Transverse colon (tissue), 4 donors: ENCODE measurements at regions of chr2 and their contacts with region 1.

Region 1: DNA sequence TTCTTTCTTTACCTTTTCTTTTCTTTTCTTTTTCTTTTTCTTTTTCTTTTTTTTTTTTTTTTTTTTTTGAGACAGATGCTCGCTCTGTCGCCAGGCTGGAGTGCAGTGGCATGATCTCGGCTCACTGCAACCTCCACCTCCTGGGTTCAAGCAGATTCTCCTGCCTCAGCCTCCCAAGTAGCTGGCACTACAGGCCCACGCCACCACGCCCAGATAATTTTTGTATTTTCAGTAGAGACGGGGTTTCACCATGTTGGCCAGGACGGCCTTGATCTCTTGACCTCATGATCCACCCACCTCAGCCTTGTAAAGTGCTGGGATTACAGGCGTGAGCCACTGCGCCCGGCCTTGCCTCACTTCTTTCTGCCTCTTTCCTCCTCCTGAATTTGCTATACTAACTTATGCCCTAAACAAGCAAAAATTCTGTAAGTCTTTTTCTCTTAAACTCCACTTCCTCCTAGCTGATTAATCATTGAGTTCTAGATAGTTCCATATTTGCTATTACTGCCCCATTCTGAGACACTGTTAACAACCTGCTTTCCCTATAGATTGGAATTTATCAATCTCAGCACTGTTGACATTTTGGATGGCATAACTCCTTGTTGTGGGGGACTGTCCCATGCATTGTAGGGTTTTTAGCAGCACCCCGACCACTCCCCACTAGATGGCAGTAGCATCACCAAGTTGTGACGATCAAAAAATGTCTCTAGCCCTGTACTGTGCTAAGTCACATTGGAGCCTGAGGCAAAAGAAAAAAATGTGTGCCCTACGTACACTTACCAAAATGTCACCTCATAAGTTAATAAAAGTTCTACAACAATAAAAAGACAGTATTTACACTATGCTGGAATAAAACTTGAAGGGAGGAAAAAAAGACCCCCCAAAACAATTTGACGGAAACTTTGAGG is 16.4 kb upstream of the THADA start:
- DNase-seq: peak; percentile 73
- H3K4me3 ChIP-seq: no peak overlapping the region
- H3K27ac ChIP-seq: peak overlapping the region in 2 of 4 donors; percentile 23 to 55
- H3K4me1 ChIP-seq: peaks cover 0 to 13% (median 2%) of the 10 kb centered on the region in 4 donors
- H3K27me3 ChIP-seq: no peaks in the 10 kb centered on the region
- CTCF ChIP-seq: peak; percentile 56 to 82 (median 76)
- EP300 ChIP-seq: no peak
- POLR2A ChIP-seq: no peak

Region 2: DNA sequence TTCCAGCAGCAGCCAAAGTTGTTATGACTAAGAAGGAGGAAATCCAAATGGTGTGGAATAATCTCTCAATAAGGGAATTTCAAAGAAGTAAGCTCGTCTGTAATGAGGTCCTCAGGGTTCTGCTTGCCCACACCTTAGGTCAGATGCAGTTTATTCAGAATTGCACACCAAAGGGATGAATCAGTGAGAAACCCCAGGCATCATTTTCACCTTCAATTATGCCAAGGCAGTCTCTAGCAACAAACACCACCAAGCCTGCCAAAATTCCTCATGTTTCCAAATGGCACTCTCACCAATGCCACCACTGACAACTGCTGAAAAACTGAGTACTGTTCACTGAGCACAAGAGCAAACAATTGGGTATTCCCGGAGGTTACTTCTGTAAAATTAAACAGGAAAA is 1162.1 kb before region 1 on chr2:
- in situ Hi-C with region 1: no loop called
- intact Hi-C with region 1: no loop called
- DNase-seq: no peak
- H3K4me3 ChIP-seq: no peak overlapping the region
- H3K27ac ChIP-seq: no peak overlapping the region
- H3K4me1 ChIP-seq: peaks cover 0 to 18% (median 8%) of the 10 kb centered on the region in 4 donors
- H3K27me3 ChIP-seq: no peaks in the 10 kb centered on the region
- CTCF ChIP-seq: no peak
- EP300 ChIP-seq: no peak
- POLR2A ChIP-seq: no peak

Region 3: DNA sequence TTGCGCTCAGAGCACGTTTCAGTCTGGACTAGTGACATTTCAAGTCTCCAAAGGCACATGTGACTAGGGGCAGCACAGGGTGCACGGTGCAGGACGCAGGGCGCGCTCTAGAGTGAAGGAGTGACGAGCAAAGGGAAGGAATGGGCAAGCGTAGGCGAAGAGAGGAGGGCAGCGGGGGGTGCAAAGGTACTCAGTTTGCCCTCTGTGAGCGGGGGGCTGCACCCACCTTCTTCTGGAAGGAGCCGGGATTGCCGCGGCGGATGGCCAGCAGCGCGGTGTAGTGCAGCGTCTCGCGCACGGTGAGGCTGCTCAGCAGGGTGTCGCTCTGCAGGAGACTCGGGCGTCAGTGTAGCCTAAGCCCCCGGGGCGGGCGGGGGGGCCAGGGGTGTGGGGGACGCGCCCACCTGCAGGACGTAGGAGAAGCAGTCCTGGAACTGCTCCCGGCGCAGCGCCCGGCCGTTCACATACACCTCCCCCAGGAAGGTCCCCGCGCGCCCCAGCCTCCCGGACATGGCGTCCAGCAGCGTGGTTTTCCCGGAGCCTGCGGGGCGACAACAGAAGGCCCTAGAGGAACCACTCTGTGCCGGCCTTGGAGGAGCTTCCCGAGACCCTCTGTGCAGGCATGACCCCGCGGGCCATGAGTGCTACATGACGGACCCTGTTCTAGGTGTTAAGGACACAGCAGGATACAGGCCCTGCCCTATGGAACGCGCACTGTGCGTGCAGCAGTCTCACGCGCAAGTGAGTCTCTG is 219.5 kb after region 1 on chr2:
- in situ Hi-C with region 1: no loop called
- intact Hi-C with region 1: no loop called
- DNase-seq: no peak
- H3K4me3 ChIP-seq: peak overlapping the region in 3 of 4 donors; percentile 19 to 31 (median 25)
- H3K27ac ChIP-seq: no peak overlapping the region
- H3K4me1 ChIP-seq: no peaks in the 10 kb centered on the region
- H3K27me3 ChIP-seq: peaks cover 31% of the 10 kb centered on the region
- CTCF ChIP-seq: no peak
- EP300 ChIP-seq: no peak
- POLR2A ChIP-seq: no peak

Region 4: GRCh38 chr2:43877782-43878464 is 265.7 kb after region 1 on chr2:
- in situ Hi-C with region 1: loop called in 3 of 4 experiments (anchors 25 kb)
- intact Hi-C with region 1: no loop called
- DNase-seq: peak; percentile 62
- H3K4me3 ChIP-seq: no peak overlapping the region
- H3K27ac ChIP-seq: no peak overlapping the region
- H3K4me1 ChIP-seq: peaks cover 0 to 3% (median 1%) of the 10 kb centered on the region in 4 donors
- H3K27me3 ChIP-seq: peaks cover 7% of the 10 kb centered on the region
- CTCF ChIP-seq: peak; percentile 78 to 95 (median 88)
- EP300 ChIP-seq: no peak
- POLR2A ChIP-seq: no peak